Activated B cell treated with CpG ODN at 0.5 μM for 24 hours (primary cell): ENCODE measurements at regions of chr5 and their contacts with region 1.

Region 1: DNA sequence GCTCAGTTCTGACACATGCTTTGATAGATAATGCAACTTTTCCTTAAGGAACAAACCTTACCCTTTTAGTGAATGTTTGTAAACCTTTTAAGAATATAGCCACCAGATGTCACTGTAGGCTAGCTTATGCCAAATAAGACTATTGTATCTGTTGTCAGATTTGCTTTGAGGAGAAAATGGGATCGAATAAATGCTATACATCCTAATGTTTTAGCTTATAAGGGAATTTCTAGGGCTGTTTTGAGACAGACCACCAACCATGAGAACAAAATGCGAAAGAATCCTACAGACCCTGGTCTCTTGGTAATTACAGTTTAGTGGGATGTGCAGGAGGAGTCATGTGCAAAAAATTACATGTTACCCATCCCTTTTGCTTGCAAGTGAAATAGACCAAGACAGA is 127.6 kb upstream of the NMUR2 start:
- DNase-seq: no peak
- ATAC-seq: no peak
- H3K4me3 Mint-ChIP-seq: no peak overlapping the region
- H3K27ac Mint-ChIP-seq: no peak overlapping the region
- H3K4me1 Mint-ChIP-seq: peaks cover under 1% of the 10 kb centered on the region
- H3K27me3 Mint-ChIP-seq: no peaks in the 10 kb centered on the region
- CTCF ChIP-seq: no peak

Region 2: GRCh38 chr5:153147891-153148623 is 615.3 kb after region 1 on chr5:
- CTCF ChIA-PET with region 1: no interaction called
- POLR2A ChIA-PET with region 1: no interaction called
- intact Hi-C with region 1: loop called (anchors 5 kb)
- DNase-seq: no peak
- ATAC-seq: no peak
- H3K4me3 Mint-ChIP-seq: no peak overlapping the region
- H3K27ac Mint-ChIP-seq: no peak overlapping the region
- H3K4me1 Mint-ChIP-seq: no peaks in the 10 kb centered on the region
- H3K27me3 Mint-ChIP-seq: no peaks in the 10 kb centered on the region
- CTCF ChIP-seq: no peak

Region 3: DNA sequence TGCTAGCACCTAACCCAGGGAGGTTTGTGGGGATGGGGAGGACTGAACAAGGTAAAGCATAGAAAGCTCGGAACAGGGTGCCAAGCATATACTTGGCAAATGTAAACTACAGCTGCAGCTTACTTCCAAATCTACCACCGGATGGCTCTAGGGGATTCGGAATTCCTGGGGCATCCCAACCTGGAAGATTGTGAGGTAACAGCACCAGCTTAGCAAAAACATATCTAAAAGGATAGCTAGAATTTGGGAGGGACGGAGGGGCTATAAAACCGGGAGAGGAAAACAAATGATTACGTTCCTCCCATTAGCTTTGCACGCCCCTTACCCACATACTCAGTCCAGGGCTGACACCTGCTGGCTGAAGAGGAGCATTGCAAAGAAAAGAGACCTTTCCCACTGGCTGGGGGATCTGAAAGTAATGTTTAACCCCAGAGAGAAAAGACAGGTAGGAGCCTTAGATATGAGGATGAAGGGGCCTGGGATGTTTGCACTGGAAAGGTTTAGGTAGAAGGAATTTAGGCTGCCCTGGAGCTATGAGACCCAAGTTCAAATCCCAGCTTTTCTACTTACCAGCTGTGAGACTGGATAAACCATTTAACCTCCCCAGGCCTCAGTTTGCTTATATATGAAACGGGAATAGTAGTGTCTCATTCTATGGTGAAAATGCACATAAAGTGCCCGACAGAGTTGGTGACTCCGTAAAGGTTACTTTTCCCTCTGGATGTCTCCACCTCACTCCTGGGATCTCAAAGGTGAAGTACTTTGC is 1432.3 kb after region 1 on chr5:
- CTCF ChIA-PET with region 1: interaction called, 16 read pairs
- POLR2A ChIA-PET with region 1: no interaction called
- intact Hi-C with region 1: no loop called
- DNase-seq: no peak
- ATAC-seq: peak; percentile 34
- H3K4me3 Mint-ChIP-seq: no peak overlapping the region
- H3K27ac Mint-ChIP-seq: no peak overlapping the region
- H3K4me1 Mint-ChIP-seq: no peaks in the 10 kb centered on the region
- H3K27me3 Mint-ChIP-seq: peaks cover 8% of the 10 kb centered on the region
- CTCF ChIP-seq: no peak